Activated B cell treated with CpG ODN at 0.5 μM for 24 hours (primary cell): ENCODE measurements at regions of chr14 and their contacts with region 1.

Region 1: DNA sequence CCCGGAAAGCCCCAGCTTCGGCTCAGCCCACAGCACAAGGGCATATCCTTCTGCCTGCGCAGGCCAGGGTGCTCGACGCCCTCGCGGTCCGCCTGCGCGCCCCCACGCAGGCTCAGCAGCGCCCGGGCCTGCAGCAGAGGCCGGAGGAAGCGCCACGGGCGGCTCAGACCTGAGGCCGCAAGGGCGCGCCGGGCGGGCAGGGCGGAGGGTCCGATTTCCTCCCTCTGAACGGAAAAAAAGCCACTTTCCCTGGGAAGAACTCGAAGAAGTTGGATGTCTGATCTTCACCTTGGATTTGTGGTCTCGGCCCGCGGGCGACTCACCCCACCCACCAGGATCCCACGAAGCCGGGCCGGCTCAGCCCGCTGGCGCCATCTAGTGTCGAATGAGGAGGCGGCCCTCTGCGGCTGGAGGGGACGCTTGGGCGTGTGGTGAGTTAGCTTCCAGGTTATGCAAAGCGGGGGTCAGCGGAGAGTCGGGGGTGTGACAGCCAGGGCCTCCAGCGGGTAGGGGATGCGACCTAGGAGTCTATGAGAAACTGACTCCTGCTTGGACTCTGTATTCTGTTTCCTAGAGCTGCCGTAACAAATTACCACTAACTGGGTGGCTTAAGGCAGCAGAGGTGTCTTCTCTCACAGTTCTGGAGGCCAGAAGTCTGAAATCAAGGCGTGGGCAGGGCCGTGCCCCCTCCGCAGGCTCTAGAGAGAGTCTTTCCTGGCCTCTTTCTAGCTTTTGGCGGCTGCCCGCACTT is 40.0 kb upstream of the SRSF5 start:
- DNase-seq: peak; percentile 86
- ATAC-seq: peak; percentile 93
- H3K4me3 Mint-ChIP-seq: peak overlapping the region; percentile 79
- H3K27ac Mint-ChIP-seq: peak overlapping the region; percentile 69
- H3K4me1 Mint-ChIP-seq: peaks cover 13% of the 10 kb centered on the region
- H3K27me3 Mint-ChIP-seq: peaks cover 4% of the 10 kb centered on the region
- CTCF ChIP-seq: peak; percentile 92

Region 2: DNA sequence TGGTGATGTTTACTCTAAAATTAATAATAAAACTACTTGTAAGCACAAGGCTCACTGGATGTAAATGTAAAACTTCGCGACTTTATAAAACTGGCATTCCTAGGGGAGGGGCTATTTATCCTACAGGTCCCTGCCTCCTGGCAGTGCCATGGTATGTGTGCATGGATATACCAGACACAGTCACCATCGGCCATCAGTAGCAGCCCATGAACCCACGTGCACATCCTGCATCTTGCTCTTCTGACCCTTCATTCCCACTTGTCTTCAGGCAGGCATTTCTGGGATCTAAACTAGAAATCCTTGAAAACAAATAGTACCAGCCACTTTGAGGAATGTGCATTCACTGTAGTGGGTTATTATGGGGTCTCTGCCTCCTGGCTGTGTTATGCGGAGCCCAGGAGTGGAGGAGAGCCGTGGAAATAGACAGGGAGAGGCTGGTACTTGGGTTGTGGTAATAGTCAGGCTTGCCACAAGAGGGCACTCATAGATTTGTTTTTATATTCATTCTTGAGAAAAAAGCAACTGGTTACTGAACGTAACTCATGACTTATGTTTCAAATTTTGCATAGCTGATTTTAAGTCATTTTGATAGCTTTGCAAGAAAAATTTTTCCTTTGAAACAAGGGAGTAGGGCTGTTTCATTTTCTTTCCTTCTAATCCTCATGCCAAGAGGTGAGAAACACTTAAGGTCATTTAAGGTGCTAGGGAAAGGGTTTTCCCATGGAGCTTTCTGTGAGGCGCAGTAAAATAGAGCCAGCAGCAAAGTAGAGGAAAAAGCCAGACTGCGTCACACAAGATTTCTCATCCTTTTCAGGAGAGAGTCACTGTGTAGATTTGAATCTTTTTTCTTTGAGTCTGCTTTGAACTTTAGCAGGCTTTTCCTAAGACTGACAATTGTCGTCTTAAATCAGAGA is 484.4 kb before region 1 on chr14:
- CTCF ChIA-PET with region 1: no interaction called
- POLR2A ChIA-PET with region 1: no interaction called
- intact Hi-C with region 1: loop called (anchors 2 kb)
- DNase-seq: no peak
- ATAC-seq: peak; percentile 67
- H3K4me3 Mint-ChIP-seq: no peak overlapping the region
- H3K27ac Mint-ChIP-seq: no peak overlapping the region
- H3K4me1 Mint-ChIP-seq: no peaks in the 10 kb centered on the region
- H3K27me3 Mint-ChIP-seq: peaks cover 4% of the 10 kb centered on the region
- CTCF ChIP-seq: no peak

Region 3: DNA sequence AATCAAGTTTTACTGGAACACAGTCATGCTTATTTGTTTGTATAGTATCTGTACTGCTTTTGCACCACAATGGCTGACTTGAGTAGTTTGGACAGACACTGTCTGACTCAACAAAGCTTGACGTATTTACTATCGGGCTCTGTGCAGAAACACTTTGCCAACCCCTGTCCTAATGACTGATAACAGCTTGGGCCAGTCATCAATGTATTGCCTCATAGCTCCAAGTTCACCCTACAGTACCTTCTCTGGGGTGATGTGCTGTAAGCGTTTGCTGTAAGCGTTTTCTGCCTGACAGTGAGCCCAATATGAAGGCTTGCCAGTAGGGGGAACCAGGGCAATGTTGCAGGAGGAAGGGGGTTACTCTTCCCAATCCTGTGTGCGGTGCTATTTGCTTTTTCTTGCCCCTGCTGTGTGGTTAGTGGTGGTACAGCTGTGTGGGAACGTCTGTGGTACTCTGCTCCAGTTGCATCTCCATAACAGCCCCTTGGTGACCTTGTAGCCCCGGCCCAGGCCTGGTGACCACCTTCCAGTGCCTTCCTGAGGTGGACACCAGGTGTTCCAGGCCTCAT is 146.8 kb before region 1 on chr14:
- CTCF ChIA-PET with region 1: interaction called, 23 read pairs
- POLR2A ChIA-PET with region 1: interaction called, 3 read pairs
- intact Hi-C with region 1: loop called (anchors 1 kb)
- DNase-seq: no peak
- ATAC-seq: no peak
- H3K4me3 Mint-ChIP-seq: no peak overlapping the region
- H3K27ac Mint-ChIP-seq: no peak overlapping the region
- H3K4me1 Mint-ChIP-seq: peaks cover 10% of the 10 kb centered on the region
- H3K27me3 Mint-ChIP-seq: peaks cover 14% of the 10 kb centered on the region
- CTCF ChIP-seq: no peak

Region 4: DNA sequence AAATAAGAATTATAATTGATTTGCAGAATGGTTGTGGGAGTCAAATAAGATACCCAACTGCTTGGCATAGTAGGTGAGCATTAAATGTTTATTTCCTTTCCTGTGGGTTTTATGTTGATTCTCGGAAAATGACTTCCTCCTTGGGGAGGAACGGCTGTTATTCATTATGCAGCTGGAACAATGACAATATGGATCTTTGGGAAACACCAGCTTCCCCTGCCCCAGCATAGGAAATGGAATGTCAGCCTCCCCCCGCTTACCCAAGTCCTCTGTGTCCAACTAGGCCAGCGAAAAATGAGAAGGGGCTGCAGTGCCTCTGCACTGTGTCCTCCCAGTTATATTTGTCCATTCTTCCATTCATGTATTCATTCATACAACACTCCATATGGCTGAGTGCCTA is 140.5 kb before region 1 on chr14:
- CTCF ChIA-PET with region 1: interaction called, 23 read pairs
- POLR2A ChIA-PET with region 1: interaction called, 4 read pairs
- intact Hi-C with region 1: loop called (anchors 1 kb)
- DNase-seq: no peak
- ATAC-seq: no peak
- H3K4me3 Mint-ChIP-seq: no peak overlapping the region
- H3K27ac Mint-ChIP-seq: no peak overlapping the region
- H3K4me1 Mint-ChIP-seq: peaks cover 2% of the 10 kb centered on the region
- H3K27me3 Mint-ChIP-seq: peaks cover 4% of the 10 kb centered on the region
- CTCF ChIP-seq: no peak

Region 5: GRCh38 chr14:69673578-69674305 is 53.2 kb before region 1 on chr14:
- CTCF ChIA-PET with region 1: interaction called, 6 read pairs
- POLR2A ChIA-PET with region 1: no interaction called
- intact Hi-C with region 1: loop called (anchors 2 kb)
- DNase-seq: no peak
- ATAC-seq: peak; percentile 48
- H3K4me3 Mint-ChIP-seq: peak overlapping the region; percentile 33
- H3K27ac Mint-ChIP-seq: peak overlapping the region; percentile 86
- H3K4me1 Mint-ChIP-seq: peaks cover 82% of the 10 kb centered on the region
- H3K27me3 Mint-ChIP-seq: no peaks in the 10 kb centered on the region
- CTCF ChIP-seq: no peak

Region 6: DNA sequence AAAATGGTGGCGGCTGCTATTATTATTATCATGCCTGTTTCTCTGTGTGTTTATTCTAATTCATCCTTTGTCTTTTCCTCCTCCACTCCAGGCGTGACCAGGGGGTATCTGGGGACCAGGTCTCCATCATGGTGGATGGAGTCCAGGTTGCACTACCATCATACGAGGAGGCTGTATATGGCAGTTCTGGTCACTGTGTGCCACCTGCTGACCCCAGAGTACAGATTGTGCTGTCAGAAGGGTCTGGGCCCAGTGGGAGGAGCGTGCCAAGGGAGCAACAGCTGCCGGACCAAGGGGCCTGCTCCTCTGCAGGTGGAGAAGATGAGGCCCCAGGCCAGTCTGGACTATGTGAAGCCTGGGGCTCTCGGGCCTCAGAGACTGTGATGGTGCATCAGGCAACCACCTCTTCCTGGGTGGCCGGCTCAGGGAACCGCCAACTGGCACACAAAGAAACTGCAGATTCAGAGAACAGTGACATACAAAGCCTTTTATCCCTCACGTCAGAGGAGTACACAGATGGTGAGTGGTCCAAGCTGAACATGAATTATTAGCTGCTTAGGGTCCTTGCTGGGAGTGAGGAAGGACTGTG is 18.3 kb before region 1 on chr14:
- CTCF ChIA-PET with region 1: interaction called, 14 read pairs
- POLR2A ChIA-PET with region 1: no interaction called
- intact Hi-C with region 1: no loop called
- DNase-seq: no peak
- ATAC-seq: peak; percentile 66
- H3K4me3 Mint-ChIP-seq: no peak overlapping the region
- H3K27ac Mint-ChIP-seq: peak overlapping the region; percentile 63
- H3K4me1 Mint-ChIP-seq: peaks cover 55% of the 10 kb centered on the region
- H3K27me3 Mint-ChIP-seq: no peaks in the 10 kb centered on the region
- CTCF ChIP-seq: no peak